ENCODE measurements at regions of chr10 and their contacts with region 1.

Region 1: GRCh38 chr10:81600194-81600593 is 274.8 kb upstream of the NRG3 start:
- DNase-seq: no peak
- H3K4me3 ChIP-seq: no peak overlapping the region
- H3K27ac ChIP-seq: no peak overlapping the region
- H3K4me1 ChIP-seq: no peaks in the 10 kb centered on the region
- H3K27me3 ChIP-seq: no peaks in the 10 kb centered on the region
- CTCF ChIP-seq: no peak
- EP300 ChIP-seq: no peak
- POLR2A ChIP-seq: no peak

Region 2: GRCh38 chr10:80894797-80895467 is 705.3 kb before region 1 on chr10:
- in situ Hi-C with region 1: no loop called
- intact Hi-C with region 1: loop called (anchors 5 kb)
- DNase-seq: no peak
- H3K4me3 ChIP-seq: no peak overlapping the region
- H3K27ac ChIP-seq: no peak overlapping the region
- H3K4me1 ChIP-seq: no peaks in the 10 kb centered on the region
- H3K27me3 ChIP-seq: no peaks in the 10 kb centered on the region
- CTCF ChIP-seq: no peak
- EP300 ChIP-seq: no peak
- POLR2A ChIP-seq: no peak

Region 3: DNA sequence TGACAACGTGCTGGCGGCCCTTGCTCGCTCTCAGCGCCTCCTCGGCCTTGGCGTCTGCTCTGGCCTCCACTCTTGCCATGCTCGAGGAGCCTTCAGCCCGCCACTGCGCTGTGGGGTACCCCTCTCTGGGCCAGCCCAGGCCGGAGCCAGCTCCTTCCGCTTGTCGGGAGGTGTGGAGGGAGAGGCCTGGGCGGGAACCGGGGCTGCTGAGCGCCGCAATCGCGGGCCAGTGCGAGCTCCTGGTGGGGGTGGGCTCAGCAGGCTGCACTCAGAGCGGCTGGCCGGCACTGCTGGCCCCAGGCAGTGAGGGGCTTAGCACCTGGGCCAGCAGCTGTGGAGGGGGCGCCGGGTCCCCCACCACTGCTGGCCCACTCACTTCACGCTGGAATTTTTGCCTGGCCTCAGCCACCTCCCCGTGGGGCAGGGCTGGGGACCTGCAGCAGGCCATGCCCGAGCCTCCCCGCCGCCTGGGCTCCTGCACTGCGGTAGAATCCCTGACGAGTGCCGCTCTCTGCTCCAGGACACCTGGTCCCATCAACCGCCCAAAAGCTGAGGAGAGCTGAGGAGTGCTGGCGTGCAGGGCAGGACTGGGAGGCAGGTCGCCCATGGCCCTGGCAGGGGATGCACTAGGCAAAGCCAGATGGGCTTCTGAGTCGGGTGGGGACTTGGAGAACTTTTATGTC is 97.4 kb before region 1 on chr10:
- in situ Hi-C with region 1: no loop called
- intact Hi-C with region 1: no loop called
- DNase-seq: no peak
- H3K4me3 ChIP-seq: no peak overlapping the region
- H3K27ac ChIP-seq: no peak overlapping the region
- H3K4me1 ChIP-seq: no peaks in the 10 kb centered on the region
- H3K27me3 ChIP-seq: no peaks in the 10 kb centered on the region
- CTCF ChIP-seq: no peak
- EP300 ChIP-seq: no peak
- POLR2A ChIP-seq: no peak

Region 4: DNA sequence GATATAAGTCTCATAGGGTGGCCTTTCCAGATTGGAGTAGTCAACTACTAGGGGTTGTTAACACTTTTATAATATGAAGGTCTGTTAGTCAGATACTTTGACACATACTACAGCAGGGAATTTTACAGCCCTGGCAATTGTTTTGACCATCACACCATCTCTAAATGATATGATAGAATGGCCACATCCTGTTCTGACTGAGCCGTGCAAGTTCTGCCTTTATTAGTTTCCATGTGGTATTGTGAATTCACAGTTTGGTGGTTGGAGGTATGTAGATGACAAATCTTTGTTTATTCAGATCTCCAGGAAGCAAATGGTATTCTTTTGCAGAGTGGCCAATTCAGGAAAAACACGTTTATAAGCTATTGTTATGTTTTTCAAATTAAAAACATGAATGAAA is 357.8 kb after region 1 on chr10:
- in situ Hi-C with region 1: no loop called
- intact Hi-C with region 1: no loop called
- DNase-seq: no peak
- H3K4me3 ChIP-seq: no peak overlapping the region
- H3K27ac ChIP-seq: no peak overlapping the region
- H3K4me1 ChIP-seq: no peaks in the 10 kb centered on the region
- H3K27me3 ChIP-seq: no peaks in the 10 kb centered on the region
- CTCF ChIP-seq: no peak
- EP300 ChIP-seq: no peak
- POLR2A ChIP-seq: no peak